GM12878 (cell line): ENCODE measurements at regions of chr3 and their contacts with region 1.

Region 1: DNA sequence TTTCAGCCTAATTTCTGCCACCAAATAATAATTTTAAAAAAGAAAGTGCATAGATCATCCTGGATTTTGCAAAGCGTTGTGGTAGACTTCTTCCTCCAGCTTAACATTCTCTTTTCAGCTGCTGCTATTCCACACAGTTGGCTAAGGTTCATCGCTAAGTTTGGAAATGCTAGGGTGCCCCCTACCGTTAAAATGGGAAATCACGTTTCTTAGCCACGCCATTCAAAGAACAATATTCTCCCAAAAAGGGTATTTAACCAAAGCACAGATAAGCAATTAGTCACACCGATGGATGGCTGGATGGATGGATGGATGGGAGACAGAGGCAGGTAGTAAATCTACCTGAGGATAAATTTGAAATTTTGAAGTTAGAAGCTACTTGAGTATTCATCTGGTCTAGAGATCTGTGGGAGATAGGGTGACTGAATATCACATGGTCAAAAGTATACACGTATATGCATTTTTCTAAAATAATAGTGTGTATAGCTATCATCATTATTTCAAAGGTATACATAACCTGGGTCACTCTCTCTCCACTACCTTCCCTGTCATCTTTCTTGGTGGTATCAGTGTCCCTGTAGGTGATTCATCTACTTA is 67.2 kb downstream of the EFHB start:
- DNase-seq: peak; percentile 19
- ATAC-seq: peak; percentile 92
- H3K4me3 ChIP-seq: no peak overlapping the region
- H3K27ac ChIP-seq: no peak overlapping the region
- H3K4me1 ChIP-seq: no peaks in the 10 kb centered on the region
- H3K27me3 ChIP-seq: no peaks in the 10 kb centered on the region
- CTCF ChIP-seq: peak; percentile 67 to 79 (median 76)
- EP300 ChIP-seq: no peak
- POLR2A ChIP-seq: no peak
- RAD21 ChIP-seq: peak; percentile 96

Region 2: GRCh38 chr3:18559331-18559842 is 1307.5 kb before region 1 on chr3:
- CTCF ChIA-PET with region 1: interaction called, 11 read pairs
- POLR2A ChIA-PET with region 1: no interaction called
- RAD21 ChIA-PET with region 1: no interaction called
- SMC1A ChIA-PET with region 1: no interaction called
- in situ Hi-C with region 1: no loop called
- intact Hi-C with region 1: no loop called
- DNase-seq: no peak
- ATAC-seq: peak; percentile 77
- H3K4me3 ChIP-seq: no peak overlapping the region
- H3K27ac ChIP-seq: no peak overlapping the region
- H3K4me1 ChIP-seq: no peaks in the 10 kb centered on the region
- H3K27me3 ChIP-seq: no peaks in the 10 kb centered on the region
- CTCF ChIP-seq: peak; percentile 70 to 74 (median 72); a peak in 5 of 6 replicates
- EP300 ChIP-seq: no peak
- POLR2A ChIP-seq: no peak
- RAD21 ChIP-seq: peak; percentile 68

Region 3: DNA sequence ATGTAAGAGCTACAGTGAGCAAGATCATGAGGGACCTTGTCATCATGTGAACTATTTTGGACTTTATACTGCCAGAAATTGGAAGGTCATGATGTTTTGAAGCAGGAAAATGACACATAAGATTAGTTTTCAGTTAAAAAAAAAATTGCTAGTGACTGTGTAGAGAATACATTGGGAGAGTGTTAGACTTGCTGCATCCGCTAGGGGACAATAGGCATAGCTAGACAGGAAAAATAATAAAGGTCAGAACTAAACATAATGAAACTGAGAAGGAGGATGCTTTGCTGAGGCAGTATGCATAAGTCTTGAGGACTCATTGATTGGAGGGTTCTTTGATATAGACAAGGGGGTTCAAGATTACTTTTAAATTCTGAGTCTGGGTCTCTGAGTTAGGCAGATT is 994.4 kb before region 1 on chr3:
- CTCF ChIA-PET with region 1: no interaction called
- POLR2A ChIA-PET with region 1: no interaction called
- RAD21 ChIA-PET with region 1: no interaction called
- SMC1A ChIA-PET with region 1: no interaction called
- in situ Hi-C with region 1: loop called (anchors 25 kb)
- intact Hi-C with region 1: no loop called
- DNase-seq: no peak
- ATAC-seq: peak; percentile 82
- H3K4me3 ChIP-seq: no peak overlapping the region
- H3K27ac ChIP-seq: no peak overlapping the region
- H3K4me1 ChIP-seq: no peaks in the 10 kb centered on the region
- H3K27me3 ChIP-seq: no peaks in the 10 kb centered on the region
- CTCF ChIP-seq: peak; percentile 27 to 49 (median 29); a peak in 4 of 6 replicates
- EP300 ChIP-seq: no peak
- POLR2A ChIP-seq: no peak
- RAD21 ChIP-seq: no peak

Region 4: DNA sequence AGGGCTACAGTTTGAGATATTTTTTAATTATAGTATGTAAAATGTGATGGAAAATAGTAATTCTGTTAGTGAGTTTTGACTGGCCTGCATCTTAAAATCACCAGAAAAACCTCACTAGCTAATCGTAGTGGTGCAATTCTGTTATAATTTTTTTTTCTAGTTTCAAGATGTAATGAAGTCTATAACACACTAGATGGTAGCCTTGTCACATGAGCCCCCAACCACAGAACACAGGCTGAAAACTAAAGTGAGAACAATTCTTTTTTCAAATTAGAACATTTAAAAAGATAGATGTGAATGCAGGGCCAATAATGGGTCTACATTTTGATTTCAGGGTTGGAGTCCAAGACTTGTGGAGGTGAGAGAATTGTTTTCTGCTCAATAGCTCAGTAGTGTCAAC is 801.8 kb before region 1 on chr3:
- CTCF ChIA-PET with region 1: no interaction called
- POLR2A ChIA-PET with region 1: no interaction called
- RAD21 ChIA-PET with region 1: no interaction called
- SMC1A ChIA-PET with region 1: no interaction called
- in situ Hi-C with region 1: loop called (anchors 10 kb)
- intact Hi-C with region 1: loop called (anchors 5 kb)
- DNase-seq: no peak
- ATAC-seq: no peak
- H3K4me3 ChIP-seq: no peak overlapping the region
- H3K27ac ChIP-seq: no peak overlapping the region
- H3K4me1 ChIP-seq: no peaks in the 10 kb centered on the region
- H3K27me3 ChIP-seq: no peaks in the 10 kb centered on the region
- CTCF ChIP-seq: peak; percentile 14 to 36 (median 17); a peak in 2 of 6 replicates
- EP300 ChIP-seq: no peak
- POLR2A ChIP-seq: no peak
- RAD21 ChIP-seq: peak; percentile 77

Region 5: GRCh38 chr3:19229086-19229485 is 637.8 kb before region 1 on chr3:
- CTCF ChIA-PET with region 1: interaction called, 4 read pairs
- POLR2A ChIA-PET with region 1: no interaction called
- RAD21 ChIA-PET with region 1: no interaction called
- SMC1A ChIA-PET with region 1: no interaction called
- in situ Hi-C with region 1: no loop called
- intact Hi-C with region 1: loop called (anchors 5 kb)
- DNase-seq: no peak
- ATAC-seq: peak; percentile 60
- H3K4me3 ChIP-seq: no peak overlapping the region
- H3K27ac ChIP-seq: no peak overlapping the region
- H3K4me1 ChIP-seq: no peaks in the 10 kb centered on the region
- H3K27me3 ChIP-seq: no peaks in the 10 kb centered on the region
- CTCF ChIP-seq: peak in 2 of 3 experiments; percentile 15 to 16; a peak in 2 of 6 replicates
- EP300 ChIP-seq: no peak
- POLR2A ChIP-seq: no peak
- RAD21 ChIP-seq: no peak

Region 6: DNA sequence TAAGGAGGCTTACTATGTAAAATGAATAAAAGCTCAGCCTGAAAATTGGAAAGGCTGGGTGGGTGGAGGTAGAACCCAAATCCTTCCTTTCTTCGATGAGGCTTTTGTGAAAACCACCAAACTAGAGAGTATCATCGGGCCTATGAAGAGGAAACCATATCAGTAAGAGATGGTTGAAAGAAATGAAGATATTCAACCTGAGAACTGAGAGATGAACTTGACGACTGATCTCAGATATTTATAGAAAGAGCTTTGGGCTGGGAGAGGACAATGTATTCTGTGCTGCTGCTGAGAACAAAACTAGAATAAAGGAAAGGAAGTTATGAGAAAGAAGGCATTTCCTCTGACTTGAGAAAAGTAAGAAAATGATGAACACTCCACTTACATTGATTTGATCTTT is 482.0 kb before region 1 on chr3:
- CTCF ChIA-PET with region 1: no interaction called
- POLR2A ChIA-PET with region 1: no interaction called
- RAD21 ChIA-PET with region 1: no interaction called
- SMC1A ChIA-PET with region 1: no interaction called
- in situ Hi-C with region 1: no loop called
- intact Hi-C with region 1: no loop called
- DNase-seq: no peak
- ATAC-seq: peak; percentile 42
- H3K4me3 ChIP-seq: no peak overlapping the region
- H3K27ac ChIP-seq: no peak overlapping the region
- H3K4me1 ChIP-seq: no peaks in the 10 kb centered on the region
- H3K27me3 ChIP-seq: no peaks in the 10 kb centered on the region
- CTCF ChIP-seq: no peak
- EP300 ChIP-seq: no peak
- POLR2A ChIP-seq: no peak
- RAD21 ChIP-seq: no peak

Region 7: DNA sequence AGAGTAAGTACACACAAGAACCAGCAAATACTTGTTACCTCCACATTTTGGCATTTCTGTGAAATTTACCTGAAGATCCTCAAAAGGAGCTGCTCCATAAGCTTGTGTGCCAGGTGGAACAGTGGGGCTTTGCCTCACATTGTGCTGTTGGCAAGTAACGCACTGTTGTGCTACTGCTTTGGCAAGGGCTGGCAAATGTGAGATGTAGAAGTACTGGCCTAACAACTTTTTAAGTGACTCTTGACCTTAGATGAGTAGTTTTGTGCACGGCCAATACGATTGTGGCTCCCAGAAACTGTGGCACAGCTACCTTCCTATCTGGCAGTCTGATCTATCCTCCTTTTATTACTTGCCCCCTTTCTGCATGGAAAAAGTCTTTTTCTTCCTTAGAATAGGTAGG is 381.6 kb before region 1 on chr3:
- CTCF ChIA-PET with region 1: interaction called, 4 read pairs
- POLR2A ChIA-PET with region 1: no interaction called
- RAD21 ChIA-PET with region 1: interaction called, 3 read pairs
- SMC1A ChIA-PET with region 1: no interaction called
- in situ Hi-C with region 1: no loop called
- intact Hi-C with region 1: loop called (anchors 10 kb)
- DNase-seq: no peak
- ATAC-seq: no peak
- H3K4me3 ChIP-seq: no peak overlapping the region
- H3K27ac ChIP-seq: no peak overlapping the region
- H3K4me1 ChIP-seq: no peaks in the 10 kb centered on the region
- H3K27me3 ChIP-seq: no peaks in the 10 kb centered on the region
- CTCF ChIP-seq: no peak
- EP300 ChIP-seq: no peak
- POLR2A ChIP-seq: no peak
- RAD21 ChIP-seq: no peak

Region 8: GRCh38 chr3:19559724-19560442 is 307.0 kb before region 1 on chr3:
- CTCF ChIA-PET with region 1: no interaction called
- POLR2A ChIA-PET with region 1: no interaction called
- RAD21 ChIA-PET with region 1: no interaction called
- SMC1A ChIA-PET with region 1: no interaction called
- in situ Hi-C with region 1: no loop called
- intact Hi-C with region 1: no loop called
- DNase-seq: peak; percentile 58
- ATAC-seq: peak; percentile 94
- H3K4me3 ChIP-seq: peak overlapping the region; percentile 51
- H3K27ac ChIP-seq: peak overlapping the region; percentile 85
- H3K4me1 ChIP-seq: peaks cover 16% of the 10 kb centered on the region
- H3K27me3 ChIP-seq: no peaks in the 10 kb centered on the region
- CTCF ChIP-seq: no peak
- EP300 ChIP-seq: peak in 1 of 2 experiments; percentile 34; a peak in 1 of 4 replicates
- POLR2A ChIP-seq: no peak
- RAD21 ChIP-seq: no peak

Region 9: DNA sequence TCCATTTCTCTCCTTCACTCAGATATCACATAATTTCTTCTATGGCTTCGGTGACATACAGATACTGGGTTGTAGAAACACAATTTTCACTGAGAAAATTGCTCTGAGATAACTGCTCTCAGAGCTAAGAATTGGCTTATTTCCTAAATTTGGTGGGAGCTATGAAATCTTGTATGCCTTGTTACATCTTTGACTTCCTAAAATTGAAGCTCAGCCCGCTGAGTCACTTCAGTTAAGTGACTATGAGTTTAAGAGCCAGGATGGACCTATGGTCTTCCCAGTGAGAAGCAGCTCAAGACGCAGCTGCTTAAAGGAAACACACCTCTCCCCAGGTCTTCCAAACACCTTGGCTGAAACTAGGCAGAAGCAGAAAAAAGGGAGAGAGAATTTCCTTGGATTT is 10.8 kb after region 1 on chr3:
- CTCF ChIA-PET with region 1: interaction called, 18 read pairs
- POLR2A ChIA-PET with region 1: no interaction called
- RAD21 ChIA-PET with region 1: no interaction called
- SMC1A ChIA-PET with region 1: interaction called, 6 read pairs
- in situ Hi-C with region 1: no loop called
- intact Hi-C with region 1: no loop called
- DNase-seq: no peak
- ATAC-seq: no peak
- H3K4me3 ChIP-seq: no peak overlapping the region
- H3K27ac ChIP-seq: no peak overlapping the region
- H3K4me1 ChIP-seq: no peaks in the 10 kb centered on the region
- H3K27me3 ChIP-seq: no peaks in the 10 kb centered on the region
- CTCF ChIP-seq: no peak
- EP300 ChIP-seq: no peak
- POLR2A ChIP-seq: no peak
- RAD21 ChIP-seq: no peak